Cardiac septum (tissue), 1 donor: ENCODE measurements at regions of chrX and their contacts with region 1.

Region 1: DNA sequence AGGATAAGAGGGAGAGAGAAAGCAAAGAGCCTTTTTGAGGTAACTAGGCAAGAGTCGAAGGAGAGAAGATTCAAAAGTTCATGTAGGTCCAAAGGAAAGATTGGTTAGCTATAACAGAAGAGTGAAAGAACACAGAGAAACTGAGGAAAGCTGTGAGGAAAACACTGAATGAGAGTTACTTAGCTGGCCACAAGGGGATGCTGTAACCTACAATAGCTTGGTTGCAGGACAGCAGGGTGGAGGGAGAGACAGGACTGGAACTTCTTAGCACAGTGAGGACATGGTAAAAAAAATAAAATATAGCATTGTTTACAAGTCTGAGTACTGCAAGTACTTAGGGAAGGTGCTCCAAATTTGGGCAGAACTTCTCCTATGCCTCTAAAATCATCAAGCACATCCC is 48.3 kb downstream of the RAI2 start:
- DNase-seq: no peak

Region 2: GRCh38 chrX:17860811-17861488 is 48.2 kb after region 1 on chrX and contains the start of gene RAI2:
- intact Hi-C with region 1: loop called (anchors 5 kb)
- DNase-seq: no peak
- total RNA-seq, gene RAI2: 37.5 TPM